RWPE1 (cell line): ENCODE measurements at regions of chr7 and their contacts with region 1.

Region 1: DNA sequence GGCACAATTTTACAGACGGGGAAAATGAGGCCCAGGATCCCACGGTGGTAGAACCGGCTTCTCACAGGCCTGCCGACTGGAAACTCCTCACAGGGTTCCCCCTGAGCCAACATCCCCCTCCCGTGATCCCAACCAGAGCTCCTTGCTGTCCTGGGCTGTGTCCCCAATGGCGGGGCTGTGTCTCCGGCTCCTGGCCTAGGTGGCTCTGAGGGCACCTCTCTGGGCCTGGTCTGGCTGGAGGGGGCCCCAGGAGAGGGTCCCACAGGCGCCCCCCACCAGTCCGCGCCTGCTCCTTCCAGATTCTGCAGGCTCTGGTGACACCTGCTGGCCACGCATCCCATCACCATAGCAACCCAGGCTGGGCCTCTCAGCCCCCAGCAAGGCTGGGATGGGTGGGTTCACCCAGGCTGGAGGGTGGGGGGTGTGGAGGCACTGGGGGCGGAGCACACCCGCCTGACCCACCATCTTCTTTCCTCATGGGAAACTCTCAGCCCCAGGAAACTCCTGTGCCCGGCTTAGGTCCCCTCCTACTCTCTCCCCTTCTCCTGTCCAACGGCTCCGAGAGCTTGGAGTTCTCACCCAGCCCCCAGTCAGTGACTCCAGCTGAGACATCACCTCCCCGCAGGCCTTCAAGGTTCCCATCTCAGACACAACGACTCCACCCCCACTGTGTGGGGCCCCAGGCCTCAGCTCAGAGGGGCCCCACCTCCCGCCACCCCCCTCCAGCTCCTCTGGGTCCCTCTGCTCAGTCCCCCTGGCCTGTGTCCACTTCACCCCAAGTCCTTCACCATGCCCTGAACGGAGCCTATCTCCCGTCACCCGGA is 27.1 kb upstream of the TNRC18 start:
- DNase-seq: peak; percentile 36
- H3K27ac ChIP-seq: peak overlapping the region; percentile 50
- CTCF ChIP-seq: peak; percentile 71

Region 2: DNA sequence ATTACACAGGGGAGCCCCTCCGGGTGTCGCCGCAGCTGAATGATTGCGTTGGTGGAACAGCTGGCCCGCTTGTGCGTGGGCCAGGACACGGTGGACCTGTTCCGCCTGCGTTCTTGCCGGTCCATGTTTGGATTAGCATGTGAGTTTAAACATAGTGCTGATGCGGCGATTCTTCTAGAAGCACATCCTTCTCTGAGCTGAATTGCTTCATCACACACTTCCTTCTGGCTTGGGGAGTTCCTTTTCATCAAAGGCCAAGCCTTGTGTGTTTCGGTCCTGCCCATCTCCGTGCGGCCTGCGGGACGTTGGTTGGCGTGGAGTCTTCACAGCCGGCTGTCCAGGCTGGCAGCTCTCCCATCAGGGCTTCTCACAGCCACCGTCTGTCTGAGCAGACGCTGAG is 213.5 kb before region 1 on chr7:
- CTCF ChIA-PET with region 1: interaction called, 13 read pairs
- POLR2A ChIA-PET with region 1: no interaction called
- DNase-seq: no peak
- H3K27ac ChIP-seq: no peak overlapping the region
- CTCF ChIP-seq: no peak

Region 3: DNA sequence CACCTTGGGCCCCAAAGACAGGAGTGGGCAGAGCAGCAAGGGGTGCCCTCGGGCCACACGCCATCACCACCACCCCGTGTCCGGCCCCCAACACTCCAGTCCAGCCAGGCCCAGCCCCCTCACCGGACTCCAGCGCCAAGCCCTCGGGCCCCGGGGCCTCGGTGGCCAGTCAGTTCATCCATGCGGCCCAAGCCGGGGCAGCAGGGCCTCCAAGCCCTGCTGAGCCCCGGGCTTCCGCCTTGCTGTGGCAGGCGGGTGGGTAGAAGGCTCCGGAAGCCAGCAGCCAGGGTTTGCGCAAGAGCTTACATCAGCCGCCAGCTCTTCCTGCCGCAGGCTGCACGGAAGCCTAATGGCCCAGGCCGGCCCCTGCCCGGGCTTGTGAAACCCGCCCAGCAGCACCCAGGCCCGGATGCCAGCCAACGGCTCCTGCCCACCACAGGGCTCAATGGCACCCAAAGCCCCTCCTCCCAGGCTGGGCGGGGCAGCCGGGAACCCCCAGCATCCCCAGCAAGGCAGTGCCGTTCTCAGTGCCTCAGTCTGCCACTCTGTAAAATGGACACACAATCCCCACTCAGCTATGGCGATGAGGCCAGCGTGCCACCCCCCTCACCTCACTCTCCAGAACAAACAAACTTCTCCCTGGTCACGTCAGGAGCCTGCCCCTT is 53.6 kb before region 1 on chr7:
- CTCF ChIA-PET with region 1: interaction called, 16 read pairs
- POLR2A ChIA-PET with region 1: no interaction called
- DNase-seq: peak; percentile 99
- H3K27ac ChIP-seq: peak overlapping the region; percentile 94
- CTCF ChIP-seq: no peak

Region 4: GRCh38 chr7:5423844-5424688 is 26.7 kb before region 1 on chr7:
- CTCF ChIA-PET with region 1: interaction called, 4 read pairs
- POLR2A ChIA-PET with region 1: interaction called, 10 read pairs
- DNase-seq: peak; percentile 96
- H3K27ac ChIP-seq: peak overlapping the region; percentile 100
- CTCF ChIP-seq: no peak